HepG2 (cell line): ENCODE measurements at regions of chr5 and their contacts with region 1.

Region 1: DNA sequence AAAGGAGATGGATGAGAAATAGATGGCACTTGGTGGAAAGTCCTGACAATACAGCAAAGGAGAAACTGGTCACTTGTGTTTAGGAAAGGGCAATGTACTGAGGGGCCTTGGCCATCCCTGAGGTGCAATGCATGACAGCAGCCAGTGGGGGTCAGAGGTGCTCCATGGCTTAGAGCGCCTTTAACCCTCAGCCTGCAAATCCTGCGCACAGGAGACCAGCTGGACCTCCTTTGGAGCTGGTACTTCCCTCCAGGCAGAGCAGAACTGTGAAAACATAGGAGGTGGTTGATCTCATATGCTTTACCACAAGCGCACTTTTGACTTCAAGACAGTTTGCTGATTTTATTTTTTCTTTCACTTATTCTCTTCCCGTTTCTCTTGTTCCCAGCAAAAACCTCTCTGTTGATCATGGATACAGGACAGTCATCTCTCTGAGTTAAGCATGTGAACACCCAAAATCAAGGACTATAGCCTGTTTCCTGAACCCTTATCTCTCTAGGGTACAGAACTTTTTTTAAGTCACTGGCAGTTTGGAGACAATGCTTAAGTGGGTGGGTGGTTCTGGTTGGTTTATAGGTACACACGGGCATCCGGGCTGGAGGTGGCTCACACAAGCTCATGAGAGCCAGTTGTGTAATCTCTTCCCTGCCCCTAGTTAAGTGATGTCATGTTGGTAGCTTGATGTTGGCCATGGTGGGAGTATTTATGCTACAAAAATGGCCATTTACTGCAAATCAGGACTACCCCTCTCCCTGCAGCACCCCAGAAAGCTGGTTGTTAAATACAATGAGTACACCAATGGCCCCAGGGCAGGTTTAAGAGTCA is 37.6 kb upstream of the ANKRD55 start:
- DNase-seq: peak; percentile 73
- ATAC-seq: peak; percentile 99
- H3K4me3 ChIP-seq: no peak overlapping the region
- H3K27ac ChIP-seq: no peak overlapping the region
- H3K4me1 ChIP-seq: peaks cover 34% of the 10 kb centered on the region
- H3K27me3 ChIP-seq: no peaks in the 10 kb centered on the region
- CTCF ChIP-seq: peak; percentile 97
- EP300 ChIP-seq: no peak
- POLR2A ChIP-seq: no peak
- RAD21 ChIP-seq: peak; percentile 98

Region 2: GRCh38 chr5:55982957-55983381 is 287.8 kb before region 1 on chr5:
- CTCF ChIA-PET with region 1: no interaction called
- POLR2A ChIA-PET with region 1: no interaction called
- in situ Hi-C with region 1: no loop called
- intact Hi-C with region 1: loop called (anchors 1 kb)
- DNase-seq: no peak
- ATAC-seq: peak; percentile 79
- H3K4me3 ChIP-seq: no peak overlapping the region
- H3K27ac ChIP-seq: no peak overlapping the region
- H3K4me1 ChIP-seq: peaks cover 61% of the 10 kb centered on the region
- H3K27me3 ChIP-seq: no peaks in the 10 kb centered on the region; a peak in 1 of 5 replicates
- CTCF ChIP-seq: peak; percentile 54
- EP300 ChIP-seq: no peak
- POLR2A ChIP-seq: no peak
- RAD21 ChIP-seq: peak; percentile 38; the same call in 1 of the 2 replicates

Region 3: GRCh38 chr5:56323505-56323904 is 52.7 kb after region 1 on chr5:
- CTCF ChIA-PET with region 1: no interaction called
- POLR2A ChIA-PET with region 1: no interaction called
- in situ Hi-C with region 1: no loop called
- intact Hi-C with region 1: no loop called
- DNase-seq: peak; percentile 50
- ATAC-seq: no peak
- H3K4me3 ChIP-seq: no peak overlapping the region
- H3K27ac ChIP-seq: no peak overlapping the region
- H3K4me1 ChIP-seq: peaks cover 52% of the 10 kb centered on the region
- H3K27me3 ChIP-seq: no peaks in the 10 kb centered on the region
- CTCF ChIP-seq: no peak
- EP300 ChIP-seq: no peak
- POLR2A ChIP-seq: no peak
- RAD21 ChIP-seq: no peak

Region 4: DNA sequence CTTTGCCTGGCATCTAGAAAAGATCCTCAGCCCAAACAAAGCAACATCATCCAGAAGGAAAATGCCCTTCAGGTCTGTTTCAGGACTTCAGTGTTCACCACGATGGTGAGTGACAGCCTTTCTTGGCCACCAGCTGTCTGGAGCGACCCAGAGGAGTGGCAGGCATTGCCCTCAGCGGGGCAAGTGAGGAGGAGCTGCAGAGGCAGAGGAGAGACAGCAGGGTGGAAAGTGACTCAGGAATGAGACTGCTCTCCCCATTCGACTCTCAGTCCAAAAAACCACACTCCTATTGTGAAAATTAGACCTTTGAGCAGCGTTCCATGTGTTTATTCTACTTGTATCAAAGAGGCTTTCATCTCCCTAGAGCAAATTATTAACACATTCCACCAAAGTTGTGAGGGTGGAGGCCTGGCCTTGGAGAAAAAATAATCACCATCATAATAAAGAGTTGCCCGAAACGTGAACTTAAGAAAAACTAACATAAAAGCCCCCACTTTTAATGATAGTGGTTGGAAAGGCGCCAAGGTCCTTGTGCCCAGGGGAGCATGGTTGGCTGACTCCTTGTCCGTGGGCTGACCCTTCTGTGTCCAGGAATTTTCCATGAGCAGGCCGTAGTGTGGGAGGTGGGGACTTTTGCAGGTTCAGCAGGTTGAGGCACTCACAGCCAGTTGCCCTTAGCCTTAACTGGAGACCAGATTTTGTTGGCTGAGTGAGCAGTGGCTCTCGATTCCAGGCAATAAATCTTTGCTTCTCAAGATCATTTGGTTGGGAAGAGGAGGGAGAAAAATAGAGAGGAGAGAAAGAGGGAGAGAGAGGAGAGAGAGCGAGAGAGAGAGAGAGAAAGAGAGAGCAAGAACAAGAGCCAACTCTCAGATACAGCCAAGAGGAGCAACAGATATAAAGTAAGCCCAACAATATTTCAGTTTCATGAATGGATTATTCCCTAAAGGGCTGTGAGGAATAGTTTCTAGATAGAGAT is 88.2 kb after region 1 on chr5:
- CTCF ChIA-PET with region 1: no interaction called
- POLR2A ChIA-PET with region 1: interaction called, 4 read pairs
- in situ Hi-C with region 1: no loop called
- intact Hi-C with region 1: loop called (anchors 1 kb)
- DNase-seq: peak; percentile 100
- ATAC-seq: peak; percentile 99
- H3K4me3 ChIP-seq: peak overlapping the region; percentile 28 to 53 (median 35)
- H3K27ac ChIP-seq: peak overlapping the region; percentile 100
- H3K4me1 ChIP-seq: peaks cover 63% of the 10 kb centered on the region
- H3K27me3 ChIP-seq: no peaks in the 10 kb centered on the region
- CTCF ChIP-seq: peak; percentile 35; the same call in 1 of the 2 replicates
- EP300 ChIP-seq: peak; percentile 95 to 97; a peak in 3 of 4 replicates
- POLR2A ChIP-seq: peak; percentile 71 to 78
- RAD21 ChIP-seq: peak; percentile 68

Region 5: DNA sequence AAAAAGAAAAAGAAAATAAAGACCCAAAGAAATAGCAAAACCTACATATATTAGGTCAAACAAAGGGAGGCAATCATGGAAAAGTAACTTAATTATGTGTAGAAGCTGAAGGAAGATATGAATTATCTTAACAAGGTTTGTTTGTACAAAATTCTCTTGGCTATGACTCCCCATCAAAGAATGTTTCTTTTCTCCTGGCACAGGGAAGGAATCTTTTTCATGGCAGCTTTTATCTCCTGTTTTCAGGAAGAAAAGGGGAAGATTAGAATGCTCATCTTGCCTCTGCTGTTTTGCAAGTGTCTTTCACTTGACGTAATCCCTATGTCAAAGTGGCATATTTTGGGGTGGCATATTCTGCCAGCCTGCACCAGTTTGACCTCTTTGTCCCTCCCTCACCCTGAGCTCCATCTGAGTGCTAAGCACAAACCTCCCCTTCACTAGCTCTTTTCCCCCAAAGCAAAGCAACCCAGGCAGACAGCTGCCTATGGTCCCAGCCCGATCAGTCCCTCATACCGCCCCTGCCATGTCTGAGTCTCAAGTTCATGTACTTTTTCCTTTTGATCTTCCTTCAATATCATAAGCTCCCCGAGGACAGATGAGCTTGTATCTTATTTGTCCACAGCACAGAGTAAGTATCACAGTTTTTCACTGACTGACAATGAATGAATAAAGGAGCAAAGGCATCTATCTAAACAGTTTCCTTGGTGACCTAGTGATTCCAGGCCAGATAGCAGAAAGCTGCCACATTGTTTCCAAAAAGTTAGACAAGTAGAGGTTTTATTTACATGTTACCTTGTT is 205.1 kb after region 1 on chr5:
- CTCF ChIA-PET with region 1: no interaction called
- POLR2A ChIA-PET with region 1: interaction called, 8 read pairs
- in situ Hi-C with region 1: no loop called
- intact Hi-C with region 1: loop called (anchors 2 kb)
- DNase-seq: peak; percentile 79
- ATAC-seq: peak; percentile 11
- H3K4me3 ChIP-seq: peak overlapping the region in 2 of 3 experiments; percentile 9 to 15; a peak in 1 of 6 replicates
- H3K27ac ChIP-seq: peak overlapping the region; percentile 54
- H3K4me1 ChIP-seq: peaks cover 67% of the 10 kb centered on the region
- H3K27me3 ChIP-seq: no peaks in the 10 kb centered on the region
- CTCF ChIP-seq: no peak
- EP300 ChIP-seq: no peak
- POLR2A ChIP-seq: no peak
- RAD21 ChIP-seq: no peak

Region 6: DNA sequence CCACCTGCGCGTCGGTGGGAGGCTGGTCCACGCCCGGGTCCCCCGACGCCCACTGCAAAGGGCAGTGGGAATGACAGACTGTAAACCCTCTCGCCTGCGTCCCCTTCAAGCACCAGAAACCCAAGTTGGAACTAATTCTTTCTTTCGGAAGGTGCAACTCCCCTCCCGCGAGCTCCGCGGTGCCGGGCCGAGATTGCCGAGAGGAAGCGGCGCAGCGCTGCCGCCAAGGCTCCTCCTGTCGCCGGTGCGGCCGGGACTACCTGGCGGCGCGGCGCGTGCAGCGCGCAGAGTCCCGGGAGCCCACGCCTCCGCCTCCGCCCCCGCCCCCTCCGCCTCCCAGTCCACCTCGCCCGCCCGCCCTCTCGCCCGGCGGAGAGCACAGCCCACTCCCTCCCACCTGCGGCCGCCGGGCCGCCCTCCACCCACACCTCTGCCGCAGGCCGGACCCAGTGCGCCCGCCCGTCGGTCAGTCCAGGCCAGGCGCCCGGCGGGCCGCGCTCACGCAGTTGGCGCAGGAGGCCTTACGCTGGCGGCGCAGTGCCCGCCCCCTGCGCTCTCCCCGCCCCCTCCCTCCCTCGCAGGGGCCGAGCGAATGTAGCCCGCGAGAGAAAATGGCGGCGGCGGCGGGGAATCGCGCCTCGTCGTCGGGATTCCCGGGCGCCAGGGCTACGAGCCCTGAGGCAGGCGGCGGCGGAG is 544.3 kb after region 1 on chr5 and contains the start of gene MAP3K1:
- CTCF ChIA-PET with region 1: no interaction called
- POLR2A ChIA-PET with region 1: no interaction called
- in situ Hi-C with region 1: no loop called
- intact Hi-C with region 1: loop called (anchors 5 kb)
- DNase-seq: peak; percentile 82
- ATAC-seq: peak; percentile 84
- H3K4me3 ChIP-seq: peak within 1 kb of the TSS; percentile 88 to 95 (median 89)
- H3K27ac ChIP-seq: peak within 1 kb of the TSS; percentile 93
- H3K4me1 ChIP-seq: peaks cover 43% of the 10 kb centered on the region
- H3K27me3 ChIP-seq: no peaks in the 10 kb centered on the region; a peak in 1 of 5 replicates
- CTCF ChIP-seq: peak; percentile 9; the same call in 1 of the 2 replicates
- EP300 ChIP-seq: no peak
- POLR2A ChIP-seq: peak; percentile 62 to 73; a peak in 3 of 4 replicates
- RAD21 ChIP-seq: peak; percentile 27
- total RNA-seq, gene MAP3K1: 30.3 and 44.1 TPM in 2 replicates

Region 7: GRCh38 chr5:57082441-57083067 is 811.8 kb after region 1 on chr5:
- CTCF ChIA-PET with region 1: no interaction called
- POLR2A ChIA-PET with region 1: no interaction called
- in situ Hi-C with region 1: loop called (anchors 25 kb)
- intact Hi-C with region 1: no loop called
- DNase-seq: peak; percentile 51
- ATAC-seq: peak; percentile 77
- H3K4me3 ChIP-seq: no peak overlapping the region
- H3K27ac ChIP-seq: no peak overlapping the region
- H3K4me1 ChIP-seq: no peaks in the 10 kb centered on the region
- H3K27me3 ChIP-seq: no peaks in the 10 kb centered on the region
- CTCF ChIP-seq: peak; percentile 66
- EP300 ChIP-seq: no peak
- POLR2A ChIP-seq: no peak
- RAD21 ChIP-seq: peak; percentile 38; the same call in 1 of the 2 replicates